ENCODE measurements at regions of chr14 and their contacts with region 1.

Region 1: GRCh38 chr14:59439256-59439965 is 25.8 kb downstream of the GPR135 start:
- DNase-seq: no peak
- H3K4me3 ChIP-seq: no peak overlapping the region
- H3K27ac ChIP-seq: peak overlapping the region; percentile 63 to 65
- H3K4me1 ChIP-seq: peaks cover 0 to 65% (median 10%) of the 10 kb centered on the region in 4 donors
- H3K27me3 ChIP-seq: no peaks in the 10 kb centered on the region
- CTCF ChIP-seq: no peak

Region 2: GRCh38 chr14:59126710-59127432 is 312.5 kb before region 1 on chr14:
- intact Hi-C with region 1: loop called (anchors 2 kb)
- DNase-seq: no peak
- H3K4me3 ChIP-seq: no peak overlapping the region
- H3K27ac ChIP-seq: no peak overlapping the region
- H3K4me1 ChIP-seq: peaks cover 0 to 5% (median 2%) of the 10 kb centered on the region in 4 donors
- H3K27me3 ChIP-seq: no peaks in the 10 kb centered on the region
- CTCF ChIP-seq: peak; percentile 75 to 87